ENCODE measurements at regions of chr2 and their contacts with region 1.

Region 1: GRCh38 chr2:150487537-150488429 is at the start of gene RND3:
- DNase-seq: peak; percentile 96
- H3K4me3 Mint-ChIP-seq: peak within 1 kb of the TSS; percentile 94
- H3K27ac Mint-ChIP-seq: peak within 1 kb of the TSS; percentile 99
- H3K4me1 Mint-ChIP-seq: peaks cover 18% of the 10 kb centered on the region
- H3K27me3 Mint-ChIP-seq: peaks cover 8% of the 10 kb centered on the region
- CTCF ChIP-seq: peak; percentile 67
- total RNA-seq, gene RND3: 118 and 143 TPM in 2 replicates

Region 2: GRCh38 chr2:149799013-149799705 is 688.6 kb before region 1 on chr2:
- CTCF ChIA-PET with region 1: no interaction called
- intact Hi-C with region 1: loop called (anchors 2 kb)
- DNase-seq: peak; percentile 6
- H3K4me3 Mint-ChIP-seq: no peak overlapping the region
- H3K27ac Mint-ChIP-seq: no peak overlapping the region
- H3K4me1 Mint-ChIP-seq: peaks cover 11% of the 10 kb centered on the region
- H3K27me3 Mint-ChIP-seq: no peaks in the 10 kb centered on the region
- CTCF ChIP-seq: no peak

Region 3: GRCh38 chr2:150143087-150143536 is 344.7 kb before region 1 on chr2:
- CTCF ChIA-PET with region 1: no interaction called
- intact Hi-C with region 1: loop called (anchors 5 kb)
- DNase-seq: peak; percentile 30
- H3K4me3 Mint-ChIP-seq: peak overlapping the region; percentile 50
- H3K27ac Mint-ChIP-seq: peak overlapping the region; percentile 90
- H3K4me1 Mint-ChIP-seq: peaks cover 66% of the 10 kb centered on the region
- H3K27me3 Mint-ChIP-seq: no peaks in the 10 kb centered on the region
- CTCF ChIP-seq: no peak

Region 4: DNA sequence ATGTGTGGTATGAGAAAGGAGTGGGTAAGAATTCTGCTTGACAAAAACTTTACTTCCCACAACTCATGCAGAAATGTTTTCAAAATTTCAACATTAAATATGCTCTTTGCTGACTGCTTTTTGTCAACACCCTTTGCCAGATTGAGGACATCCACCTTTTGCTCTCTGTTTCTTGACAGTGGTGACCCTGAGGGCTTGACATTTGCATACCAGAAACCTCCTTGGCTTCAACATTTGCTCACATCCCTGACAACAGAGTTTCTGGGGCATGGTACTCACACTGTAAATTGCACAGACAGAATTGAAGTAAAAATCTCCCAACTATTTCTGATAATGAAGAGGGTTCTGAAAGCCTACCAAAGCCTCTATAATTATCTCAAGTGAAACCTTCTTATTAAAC is 96.0 kb before region 1 on chr2:
- CTCF ChIA-PET with region 1: no interaction called
- intact Hi-C with region 1: no loop called
- DNase-seq: no peak
- H3K4me3 Mint-ChIP-seq: no peak overlapping the region
- H3K27ac Mint-ChIP-seq: no peak overlapping the region
- H3K4me1 Mint-ChIP-seq: no peaks in the 10 kb centered on the region
- H3K27me3 Mint-ChIP-seq: no peaks in the 10 kb centered on the region
- CTCF ChIP-seq: no peak

Region 5: DNA sequence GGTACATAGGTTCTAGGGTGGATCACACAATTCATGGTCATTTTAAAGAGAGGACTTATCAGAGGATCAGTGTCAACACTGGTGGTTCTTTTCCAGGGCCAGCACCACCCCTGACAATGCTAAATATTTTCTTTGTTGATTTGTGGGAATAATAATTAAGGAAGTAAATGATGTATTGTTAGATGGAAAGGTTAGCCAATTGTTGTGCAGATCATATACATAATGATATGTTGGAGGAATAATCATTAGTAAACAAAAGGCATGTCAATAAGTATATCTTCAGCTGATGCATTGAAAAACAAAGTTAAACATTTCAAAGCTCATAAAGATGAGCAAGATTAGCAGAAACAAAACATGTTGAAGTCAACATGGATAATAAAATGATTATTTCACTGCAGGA is 15.6 kb after region 1 on chr2:
- CTCF ChIA-PET with region 1: no interaction called
- intact Hi-C with region 1: no loop called
- DNase-seq: no peak
- H3K4me3 Mint-ChIP-seq: no peak overlapping the region
- H3K27ac Mint-ChIP-seq: no peak overlapping the region
- H3K4me1 Mint-ChIP-seq: no peaks in the 10 kb centered on the region
- H3K27me3 Mint-ChIP-seq: no peaks in the 10 kb centered on the region
- CTCF ChIP-seq: no peak

Region 6: GRCh38 chr2:150526827-150527226 is 39.0 kb after region 1 on chr2:
- CTCF ChIA-PET with region 1: interaction called, 3 read pairs
- intact Hi-C with region 1: loop called (anchors 1 kb)
- DNase-seq: peak; percentile 66
- H3K4me3 Mint-ChIP-seq: peak overlapping the region; percentile 33
- H3K27ac Mint-ChIP-seq: peak overlapping the region; percentile 98
- H3K4me1 Mint-ChIP-seq: peaks cover 44% of the 10 kb centered on the region
- H3K27me3 Mint-ChIP-seq: no peaks in the 10 kb centered on the region
- CTCF ChIP-seq: no peak

Region 7: GRCh38 chr2:151051574-151052220 is 563.9 kb after region 1 on chr2:
- CTCF ChIA-PET with region 1: no interaction called
- intact Hi-C with region 1: loop called (anchors 5 kb)
- DNase-seq: peak; percentile 48
- H3K4me3 Mint-ChIP-seq: no peak overlapping the region
- H3K27ac Mint-ChIP-seq: no peak overlapping the region
- H3K4me1 Mint-ChIP-seq: peaks cover 35% of the 10 kb centered on the region
- H3K27me3 Mint-ChIP-seq: no peaks in the 10 kb centered on the region
- CTCF ChIP-seq: peak; percentile 38